IMR-90 (cell line): ENCODE measurements at regions of chr11 and their contacts with region 1.

Region 1: DNA sequence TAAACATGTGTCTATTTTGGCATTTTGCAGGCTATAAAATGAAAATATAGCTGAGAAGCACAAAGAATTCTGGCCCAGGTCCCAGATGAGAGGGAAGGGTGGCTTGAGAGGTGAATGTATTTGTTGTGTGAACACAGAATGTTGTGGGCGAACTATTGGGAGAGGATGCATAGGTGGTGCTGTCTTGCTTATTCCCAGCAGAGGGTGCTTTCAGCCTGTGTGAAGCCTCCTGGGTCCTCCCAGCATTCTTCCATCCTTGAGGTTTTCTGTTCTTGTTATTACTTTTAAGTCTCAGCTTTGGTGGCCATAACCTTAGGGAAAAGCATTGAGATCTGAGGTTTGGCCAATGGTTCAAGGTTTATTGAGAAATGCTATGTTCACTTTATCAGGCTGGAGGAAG is 108.7 kb upstream of the SNX19 start:
- DNase-seq: peak; percentile 72
- ATAC-seq: peak; percentile 99
- H3K4me3 ChIP-seq: no peak overlapping the region
- H3K27ac ChIP-seq: no peak overlapping the region
- H3K4me1 ChIP-seq: no peaks in the 10 kb centered on the region
- H3K27me3 ChIP-seq: no peaks in the 10 kb centered on the region
- CTCF ChIP-seq: peak; percentile 81
- POLR2A ChIP-seq: no peak
- RAD21 ChIP-seq: peak; percentile 91

Region 2: DNA sequence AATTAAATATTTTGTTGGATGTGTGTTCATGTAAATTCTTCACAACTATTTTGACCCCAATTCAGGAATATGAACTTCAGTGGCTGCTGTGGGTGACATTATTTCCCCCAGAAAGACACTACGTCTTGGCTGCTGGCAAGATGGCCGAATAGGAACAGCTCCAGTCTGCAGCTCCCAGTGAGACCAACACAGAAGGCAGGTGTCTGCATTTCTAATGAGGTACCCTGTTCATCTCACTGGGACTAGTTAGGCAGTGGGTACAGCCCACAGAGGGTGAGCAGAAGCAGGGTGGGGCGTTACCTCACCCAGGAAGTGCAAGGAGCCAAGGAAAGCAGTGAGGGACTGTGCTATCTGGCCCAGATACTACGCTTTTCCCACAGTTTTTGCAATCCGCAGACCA is 775.6 kb before region 1 on chr11:
- CTCF ChIA-PET with region 1: no interaction called
- POLR2A ChIA-PET with region 1: no interaction called
- dilution Hi-C with region 1: no loop called
- in situ Hi-C with region 1: no loop called
- intact Hi-C with region 1: no loop called
- DNase-seq: no peak
- ATAC-seq: no peak
- H3K4me3 ChIP-seq: no peak overlapping the region
- H3K27ac ChIP-seq: no peak overlapping the region
- H3K4me1 ChIP-seq: peaks cover 10% of the 10 kb centered on the region
- H3K27me3 ChIP-seq: no peaks in the 10 kb centered on the region
- CTCF ChIP-seq: no peak
- POLR2A ChIP-seq: no peak
- RAD21 ChIP-seq: no peak

Region 3: GRCh38 chr11:131217313-131218310 is 192.6 kb after region 1 on chr11:
- CTCF ChIA-PET with region 1: interaction called, 8 read pairs
- POLR2A ChIA-PET with region 1: no interaction called
- dilution Hi-C with region 1: no loop called
- in situ Hi-C with region 1: no loop called
- intact Hi-C with region 1: loop called (anchors 1 kb)
- DNase-seq: peak; percentile 21
- ATAC-seq: peak; percentile 79
- H3K4me3 ChIP-seq: no peak overlapping the region
- H3K27ac ChIP-seq: no peak overlapping the region
- H3K4me1 ChIP-seq: no peaks in the 10 kb centered on the region
- H3K27me3 ChIP-seq: peaks cover 8% of the 10 kb centered on the region
- CTCF ChIP-seq: peak; percentile 61
- POLR2A ChIP-seq: no peak
- RAD21 ChIP-seq: peak; percentile 71

Region 4: DNA sequence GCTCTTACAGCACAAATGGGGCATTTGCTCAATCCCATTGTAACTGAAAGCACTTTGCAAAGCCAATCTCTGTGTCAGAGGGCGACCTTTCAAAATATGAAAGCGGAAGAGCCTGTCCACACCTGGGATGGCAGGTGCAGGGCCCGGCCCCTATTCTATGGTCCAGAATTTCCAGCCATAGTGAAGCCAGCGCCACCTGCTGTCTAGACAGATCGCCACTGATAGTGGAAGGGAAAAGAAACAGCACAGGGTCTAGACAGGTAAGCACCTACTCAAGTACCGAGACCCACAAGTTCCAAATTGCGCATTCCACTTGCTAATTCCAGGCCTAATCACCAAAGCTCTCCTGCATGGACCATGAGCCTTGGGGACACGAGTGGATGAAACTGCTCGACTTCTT is 486.8 kb after region 1 on chr11:
- CTCF ChIA-PET with region 1: interaction called, 3 read pairs
- POLR2A ChIA-PET with region 1: no interaction called
- dilution Hi-C with region 1: no loop called
- in situ Hi-C with region 1: no loop called
- intact Hi-C with region 1: loop called (anchors 5 kb)
- DNase-seq: no peak
- ATAC-seq: no peak
- H3K4me3 ChIP-seq: no peak overlapping the region
- H3K27ac ChIP-seq: no peak overlapping the region
- H3K4me1 ChIP-seq: no peaks in the 10 kb centered on the region
- H3K27me3 ChIP-seq: no peaks in the 10 kb centered on the region
- CTCF ChIP-seq: peak; percentile 43
- POLR2A ChIP-seq: no peak
- RAD21 ChIP-seq: peak; percentile 33